GM10248 (cell line): ENCODE measurements at regions of chrX and their contacts with region 1.

Region 1: GRCh38 chrX:68828740-68829552 is at the start of gene EFNB1:
- DNase-seq: peak; percentile 85
- CTCF ChIP-seq: no peak

Region 2: GRCh38 chrX:69060631-69061408 is 231.9 kb after region 1 on chrX:
- CTCF ChIA-PET with region 1: interaction called, 38 read pairs
- POLR2A ChIA-PET with region 1: interaction called, 3 read pairs
- DNase-seq: no peak
- CTCF ChIP-seq: peak; percentile 20

Region 3: DNA sequence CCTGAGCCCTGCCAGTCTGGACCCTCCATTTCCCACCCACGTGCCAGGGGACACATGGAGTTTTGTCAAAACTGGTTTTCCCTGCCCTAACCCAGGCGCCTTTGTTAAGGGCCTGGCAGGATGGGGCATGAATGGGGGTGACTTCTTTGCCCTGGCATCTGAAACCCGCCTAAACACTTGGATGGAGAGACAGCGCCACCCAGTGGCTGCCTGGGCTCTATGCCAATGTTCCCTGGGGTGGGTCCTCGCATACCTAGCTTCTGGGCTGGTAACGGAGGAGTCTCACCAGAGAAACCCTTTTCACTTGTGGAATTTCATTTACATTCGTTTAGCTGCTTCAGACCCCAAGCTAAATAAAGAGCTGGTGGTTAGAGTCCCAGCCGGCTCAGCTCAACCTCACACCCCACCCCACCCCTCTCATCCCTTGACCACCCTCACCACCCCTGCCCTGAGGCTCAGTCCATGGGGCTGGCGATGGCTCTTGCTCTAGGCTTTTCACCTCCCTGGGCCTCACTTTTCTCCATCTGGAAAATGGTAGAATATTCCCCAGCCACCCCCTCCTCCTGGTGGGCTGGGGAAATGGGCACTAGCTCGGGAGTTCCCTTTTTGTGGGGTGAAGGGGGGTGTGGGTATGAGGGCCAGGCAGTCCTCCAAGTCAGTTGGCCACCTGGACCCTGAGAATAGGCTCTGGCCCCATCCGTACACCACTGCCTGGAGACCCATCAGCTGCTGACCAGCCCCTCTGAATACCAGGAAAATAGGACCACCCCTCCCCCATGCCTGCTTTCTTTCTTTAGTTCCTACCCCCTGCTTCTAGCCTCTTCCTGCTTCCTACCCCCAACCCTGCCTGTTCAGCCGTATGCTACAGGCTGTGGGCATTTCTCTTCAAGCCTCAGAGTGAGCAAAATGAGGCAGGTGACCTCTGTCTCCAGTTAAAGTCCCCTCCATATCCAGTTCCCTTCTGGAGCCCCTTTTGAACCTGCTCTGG is 393.5 kb after region 1 on chrX:
- CTCF ChIA-PET with region 1: interaction called, 53 read pairs
- POLR2A ChIA-PET with region 1: interaction called, 5 read pairs
- DNase-seq: peak; percentile 73
- CTCF ChIP-seq: peak; percentile 61

Region 4: GRCh38 chrX:69289046-69289792 is 460.3 kb after region 1 on chrX:
- CTCF ChIA-PET with region 1: interaction called, 18 read pairs
- POLR2A ChIA-PET with region 1: no interaction called
- DNase-seq: no peak
- CTCF ChIP-seq: no peak

Region 5: DNA sequence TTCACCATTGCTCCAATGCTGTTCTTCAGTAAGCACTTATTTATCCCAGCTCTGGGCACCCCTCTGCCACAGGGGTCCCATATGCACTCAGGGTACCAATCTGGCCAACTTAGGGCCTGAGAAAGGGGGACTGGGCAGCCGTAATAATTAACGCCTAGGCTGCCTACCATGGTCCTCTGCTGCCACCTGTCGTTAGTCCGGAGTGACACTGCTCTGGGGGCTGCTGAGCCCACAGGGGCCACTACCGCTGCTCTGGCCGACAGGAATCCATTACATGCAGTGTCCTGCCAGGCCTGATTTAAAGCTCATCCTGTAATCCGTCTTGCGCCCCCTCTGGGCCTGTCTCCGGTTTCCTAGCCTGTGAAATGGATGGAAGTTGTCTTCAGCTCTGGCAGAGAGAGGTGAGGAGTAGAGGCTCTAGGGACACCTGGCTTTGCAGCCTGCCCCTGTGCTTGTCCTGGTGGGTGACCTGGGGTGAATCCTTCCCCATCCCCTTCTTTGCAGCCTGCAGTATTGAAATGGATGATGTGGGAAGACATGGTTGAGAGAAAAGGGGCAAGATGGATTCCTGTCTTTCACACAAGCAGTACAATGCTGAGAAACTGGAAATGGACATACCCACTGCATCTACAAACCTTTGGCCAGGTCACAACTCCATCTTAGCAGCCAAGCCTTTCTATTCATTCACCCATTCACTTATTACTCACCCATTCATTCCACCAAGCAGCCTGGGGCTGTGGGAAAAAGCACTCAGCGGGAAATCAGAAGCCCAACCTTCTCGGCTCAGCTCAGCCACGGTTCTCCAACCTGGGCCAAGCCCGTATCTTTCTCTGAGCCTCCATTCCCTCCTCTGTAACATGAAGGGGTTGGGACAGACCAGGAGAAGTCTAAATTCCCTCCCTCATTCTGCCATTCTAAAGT is 558.9 kb after region 1 on chrX:
- CTCF ChIA-PET with region 1: interaction called, 16 read pairs
- POLR2A ChIA-PET with region 1: no interaction called
- DNase-seq: peak; percentile 59
- CTCF ChIP-seq: peak; percentile 74